Tibial artery (tissue), 4 donors: ENCODE measurements at regions of chr14 and their contacts with region 1.

Region 1: GRCh38 chr14:105351920-105352851 is 37.6 kb downstream of the PACS2 start:
- DNase-seq: peak; percentile 75 to 90
- H3K4me3 ChIP-seq: no peak overlapping the region
- H3K27ac ChIP-seq: no peak overlapping the region
- H3K4me1 ChIP-seq: no peaks in the 10 kb centered on the region
- H3K27me3 ChIP-seq: no peaks in the 10 kb centered on the region
- CTCF ChIP-seq: peak; percentile 79 to 87

Region 2: GRCh38 chr14:105086833-105087307 is 265.3 kb before region 1 on chr14:
- intact Hi-C with region 1: loop called (anchors 5 kb)
- DNase-seq: peak; percentile 80 to 84
- H3K4me3 ChIP-seq: peak overlapping the region; percentile 43 to 61
- H3K27ac ChIP-seq: peak overlapping the region; percentile 74 to 98
- H3K4me1 ChIP-seq: peaks cover 8 to 55% (median 46%) of the 10 kb centered on the region in 4 donors
- H3K27me3 ChIP-seq: no peaks in the 10 kb centered on the region
- CTCF ChIP-seq: peak; percentile 72 to 75

Region 3: GRCh38 chr14:105201925-105202513 is 150.2 kb before region 1 on chr14:
- intact Hi-C with region 1: loop called (anchors 2 kb)
- DNase-seq: no peak
- H3K4me3 ChIP-seq: no peak overlapping the region
- H3K27ac ChIP-seq: no peak overlapping the region
- H3K4me1 ChIP-seq: peaks cover 0 to 57% (median 33%) of the 10 kb centered on the region in 4 donors
- H3K27me3 ChIP-seq: peaks cover 0 to 62% of the 10 kb centered on the region in 2 donors
- CTCF ChIP-seq: no peak

Region 4: GRCh38 chr14:105317546-105317945 is 34.6 kb before region 1 on chr14:
- intact Hi-C with region 1: no loop called
- DNase-seq: peak; percentile 66 to 71
- H3K4me3 ChIP-seq: peak overlapping the region; percentile 7 to 77
- H3K27ac ChIP-seq: peak overlapping the region; percentile 25 to 78
- H3K4me1 ChIP-seq: peaks cover 0 to 39% (median 30%) of the 10 kb centered on the region in 4 donors
- H3K27me3 ChIP-seq: no peaks in the 10 kb centered on the region
- CTCF ChIP-seq: peak in 1 of 2 experiments; percentile 29